Dorsolateral prefrontal cortex (tissue), 120 donors: ENCODE measurements at regions of chr6 and their contacts with region 1.

Region 1: DNA sequence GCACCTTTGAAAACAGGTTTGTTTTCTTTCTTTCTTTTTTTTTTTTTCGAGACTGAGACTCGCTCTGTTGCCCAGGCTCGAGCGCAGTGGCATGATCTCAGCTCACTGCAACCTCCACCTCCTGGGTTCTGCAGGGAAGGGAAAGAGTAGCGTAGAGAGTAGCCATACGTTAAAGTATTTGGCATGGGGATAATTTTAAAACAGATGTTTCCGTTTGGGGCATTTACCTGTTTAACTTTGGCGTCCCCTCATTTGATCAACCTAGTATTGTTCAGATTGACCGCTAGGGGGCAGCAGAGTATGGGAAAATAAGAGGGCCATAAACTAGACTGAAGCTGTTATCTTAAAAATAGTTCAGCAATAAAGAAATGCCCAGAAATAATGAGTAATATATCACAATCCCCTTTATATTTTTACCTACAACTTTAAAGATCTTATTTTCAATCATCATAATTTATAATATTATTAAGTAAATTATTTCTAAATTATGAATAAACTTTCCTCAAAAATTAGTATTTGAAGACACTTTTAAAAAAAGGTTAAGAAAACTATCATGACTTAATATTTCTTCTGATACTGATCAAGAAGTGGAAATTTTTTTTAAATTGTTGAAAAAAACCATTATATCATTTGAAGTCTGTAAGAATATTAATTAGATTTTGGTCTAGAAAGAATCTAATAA is 7.6 kb upstream of the TAAR9 start:
- DNase-seq: peak in 4 of 10 donors; percentile 40 to 71 (median 51)
- H3K4me3 ChIP-seq: peak overlapping the region in 29 of 59 donors; percentile 8 to 48 (median 32)
- H3K27ac ChIP-seq: no peak overlapping the region
- H3K27me3 ChIP-seq: peaks cover 0 to 3% (median 0%) of the 10 kb centered on the region in 45 donors
- CTCF ChIP-seq: peak in 55 of 56 donors; percentile 80 to 99 (median 91)

Region 2: GRCh38 chr6:132412656-132413498 is 117.6 kb before region 1 on chr6:
- intact Hi-C with region 1: no loop called
- DNase-seq: no peak
- H3K4me3 ChIP-seq: no peak overlapping the region
- H3K27ac ChIP-seq: no peak overlapping the region
- H3K27me3 ChIP-seq: no peaks in the 10 kb centered on the region
- CTCF ChIP-seq: no peak

Region 3: DNA sequence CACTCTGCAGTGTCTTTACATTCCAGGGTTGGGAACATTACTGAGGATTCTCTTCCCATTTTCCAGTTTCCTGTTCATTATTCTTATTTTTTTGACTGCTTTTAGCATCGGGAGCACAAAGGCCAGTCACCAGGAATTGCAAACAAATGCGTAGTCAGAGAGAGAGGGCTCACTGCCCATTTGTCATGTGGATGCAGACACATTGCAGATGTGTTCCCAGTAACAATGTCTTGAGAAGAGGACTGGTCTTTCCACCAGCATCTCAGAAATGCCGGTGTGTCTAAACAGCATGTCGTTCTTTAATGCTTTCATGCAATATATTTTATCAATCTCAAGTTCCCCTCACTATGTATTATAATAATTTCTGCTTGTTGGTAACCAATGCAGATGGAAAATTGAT is 38.7 kb after region 1 on chr6:
- intact Hi-C with region 1: loop called in 1 of 2 experiments (anchors 2 kb)
- DNase-seq: peak in 9 of 10 donors; percentile 23 to 87 (median 54)
- H3K4me3 ChIP-seq: peak overlapping the region in 13 of 59 donors; percentile 4 to 38 (median 23)
- H3K27ac ChIP-seq: peak overlapping the region; percentile 12 to 93 (median 85)
- H3K27me3 ChIP-seq: peaks cover 0 to 12% (median 0%) of the 10 kb centered on the region in 45 donors
- CTCF ChIP-seq: peak in 4 of 56 donors; percentile 2 to 25 (median 18)

Region 4: DNA sequence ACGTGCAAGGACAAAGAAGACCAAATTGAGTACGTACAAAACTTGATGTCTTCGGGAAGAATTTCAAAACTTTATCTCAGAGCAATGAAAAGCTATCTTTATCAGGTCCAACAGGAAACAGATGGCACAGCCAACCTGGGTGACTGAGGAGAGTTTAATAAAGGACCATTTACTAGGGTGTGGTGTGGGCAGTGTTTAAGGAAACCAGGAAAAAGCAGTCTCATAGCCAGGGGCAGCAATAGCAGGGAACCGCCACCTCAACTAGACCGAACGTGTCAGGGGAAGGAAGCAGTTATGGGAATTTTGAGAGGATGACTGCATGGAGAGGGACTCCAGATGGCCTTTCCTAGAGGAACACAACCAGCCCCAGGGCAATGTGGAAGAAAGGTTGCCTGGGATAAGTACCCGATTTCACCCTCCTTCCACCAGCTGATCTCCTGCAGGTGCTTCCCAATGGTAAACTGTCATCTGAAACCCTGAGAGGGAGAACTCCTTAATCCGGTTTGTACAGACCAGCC is 74.3 kb after region 1 on chr6:
- intact Hi-C with region 1: loop called in 1 of 2 experiments (anchors 5 kb)
- DNase-seq: no peak
- H3K4me3 ChIP-seq: no peak overlapping the region
- H3K27ac ChIP-seq: no peak overlapping the region
- H3K27me3 ChIP-seq: no peaks in the 10 kb centered on the region
- CTCF ChIP-seq: no peak

Region 5: DNA sequence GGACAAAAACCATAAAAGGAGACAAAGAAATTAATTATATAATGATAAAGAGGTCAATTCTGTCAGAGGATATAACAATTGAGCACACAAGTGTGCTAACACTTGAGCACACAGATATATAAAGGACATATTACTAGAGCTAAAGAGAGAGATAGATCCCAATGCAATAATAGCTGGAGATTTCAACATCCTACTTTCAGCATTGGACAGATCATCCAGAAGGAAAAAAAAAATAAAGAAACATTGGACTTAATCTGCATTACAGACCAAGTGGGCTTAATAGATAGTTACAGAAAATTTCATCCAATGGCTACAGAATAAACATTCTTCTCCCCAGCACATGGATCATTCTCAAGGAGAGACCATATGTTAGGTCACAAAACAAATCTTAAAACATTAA is 173.5 kb after region 1 on chr6:
- intact Hi-C with region 1: no loop called
- DNase-seq: no peak
- H3K4me3 ChIP-seq: no peak overlapping the region
- H3K27ac ChIP-seq: no peak overlapping the region
- H3K27me3 ChIP-seq: no peaks in the 10 kb centered on the region
- CTCF ChIP-seq: no peak

Region 6: GRCh38 chr6:132715204-132715603 is 184.8 kb after region 1 on chr6:
- intact Hi-C with region 1: loop called (anchors 5 kb)
- DNase-seq: peak; percentile 4 to 81 (median 59)
- H3K4me3 ChIP-seq: no peak overlapping the region
- H3K27ac ChIP-seq: no peak overlapping the region
- H3K27me3 ChIP-seq: no peaks in the 10 kb centered on the region
- CTCF ChIP-seq: peak in 52 of 56 donors; percentile 18 to 75 (median 52)

Region 7: DNA sequence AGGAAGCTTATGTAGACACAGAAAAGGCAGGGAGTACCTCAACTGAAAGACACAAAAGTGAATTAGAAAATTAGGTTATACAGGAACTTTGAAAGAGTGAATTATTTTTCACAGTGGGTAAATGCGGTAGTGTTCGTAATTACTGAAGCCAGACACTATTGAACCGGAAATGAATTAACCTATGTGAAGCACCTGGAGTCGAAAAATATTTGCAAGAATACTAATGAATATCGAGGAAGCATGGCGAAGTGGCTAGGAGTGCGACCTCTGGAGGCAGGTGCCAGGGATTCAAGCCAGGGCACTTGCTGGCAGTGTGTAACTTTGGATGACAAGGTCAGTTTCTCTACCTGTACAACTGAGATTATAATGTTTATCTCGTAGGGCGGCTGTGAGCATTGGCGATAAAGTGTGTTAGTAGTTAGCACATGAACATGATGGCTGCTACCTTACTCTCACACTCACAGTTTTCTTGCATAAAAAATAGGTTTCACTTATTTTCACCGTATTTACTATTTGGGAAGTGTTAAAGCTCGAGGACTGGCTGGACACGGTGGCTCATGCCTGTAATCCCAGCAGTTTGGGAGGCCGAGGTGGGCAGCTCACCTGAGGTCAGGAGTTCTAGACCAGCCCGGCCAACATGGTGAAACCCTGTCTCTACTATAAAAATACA is 268.6 kb after region 1 on chr6:
- intact Hi-C with region 1: loop called (anchors 5 to 10 kb)
- DNase-seq: peak in 9 of 10 donors; percentile 38 to 72 (median 60)
- H3K4me3 ChIP-seq: peak overlapping the region in 38 of 59 donors; percentile 60 to 92 (median 77)
- H3K27ac ChIP-seq: peak overlapping the region in 24 of 59 donors; percentile 25 to 92 (median 80)
- H3K27me3 ChIP-seq: no peaks in the 10 kb centered on the region
- CTCF ChIP-seq: peak; percentile 43 to 74 (median 62)

Region 8: GRCh38 chr6:132973514-132973993 is 443.1 kb after region 1 on chr6:
- intact Hi-C with region 1: no loop called
- DNase-seq: no peak
- H3K4me3 ChIP-seq: peak overlapping the region in 1 of 59 donors; percentile 0
- H3K27ac ChIP-seq: peak overlapping the region in 32 of 59 donors; percentile 4 to 76 (median 24)
- H3K27me3 ChIP-seq: no peaks in the 10 kb centered on the region
- CTCF ChIP-seq: no peak